ENCODE measurements at regions of chr15 and their contacts with region 1.

Region 1: DNA sequence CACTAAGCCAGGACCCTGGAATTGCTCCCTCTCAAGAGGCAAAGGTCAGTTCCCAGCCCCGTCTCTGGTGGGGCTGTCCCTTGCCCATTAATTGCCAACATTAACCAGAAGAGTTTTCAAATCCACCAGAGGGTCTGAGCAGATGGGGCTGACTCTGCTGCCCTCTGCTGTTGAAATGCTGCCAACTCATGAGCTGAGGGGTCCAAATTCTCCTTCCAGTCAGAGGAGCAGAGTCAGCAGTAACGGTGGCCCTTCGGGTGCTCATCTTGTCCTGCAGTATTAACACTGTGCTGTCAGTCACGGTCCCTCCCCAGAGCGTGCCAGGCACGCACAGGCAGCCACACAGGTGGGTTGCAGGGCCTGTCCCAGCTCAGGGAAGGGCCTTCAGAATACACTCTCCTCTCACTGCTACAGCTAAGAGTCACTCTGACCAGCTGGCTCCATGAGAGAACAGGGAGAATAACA is 10.7 kb upstream of the SPTBN5 start:
- DNase-seq: peak; percentile 70 to 88
- ATAC-seq: peak; percentile 87 to 93 (median 89)
- H3K4me3 ChIP-seq: no peak overlapping the region
- H3K4me3 Mint-ChIP-seq: no peak overlapping the region
- H3K27ac ChIP-seq: no peak overlapping the region
- H3K27ac Mint-ChIP-seq: peak overlapping the region; percentile 45 to 57
- H3K4me1 ChIP-seq: peaks cover 9% of the 10 kb centered on the region
- H3K4me1 Mint-ChIP-seq: peaks cover 7% of the 10 kb centered on the region in 2 donors
- H3K27me3 ChIP-seq: no peaks in the 10 kb centered on the region
- H3K27me3 Mint-ChIP-seq: no peaks in the 10 kb centered on the region
- CTCF ChIP-seq: peak; percentile 96

Region 2: DNA sequence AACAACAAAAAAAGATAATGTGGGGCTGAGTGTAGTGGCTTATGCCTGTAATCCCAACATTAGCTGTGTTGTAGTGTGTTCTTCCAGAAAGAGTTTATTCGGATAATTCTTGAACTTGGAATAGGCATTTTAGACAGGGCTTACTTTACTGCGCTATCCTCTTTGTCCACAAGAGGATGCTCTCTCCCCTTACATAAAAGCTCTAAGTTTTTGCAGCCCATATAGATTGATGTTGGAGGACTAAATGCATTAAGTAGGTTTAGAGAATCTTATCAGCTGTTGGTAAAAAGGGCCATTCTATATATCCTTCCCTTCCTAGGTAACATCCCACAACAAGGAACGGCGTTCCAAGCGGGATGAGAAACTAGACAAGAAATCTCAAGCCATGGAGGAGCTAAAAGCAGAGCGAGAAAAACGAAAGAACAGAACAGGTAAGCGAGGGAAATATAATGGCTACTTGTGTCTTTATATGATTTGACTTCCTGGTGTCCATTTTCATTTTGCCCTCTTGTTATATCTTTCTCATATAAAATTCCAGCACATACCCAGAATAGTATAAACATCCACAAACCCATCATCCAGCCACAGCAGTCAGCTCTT is 438.7 kb before region 1 on chr15:
- intact Hi-C with region 1: loop called (anchors 5 kb)
- DNase-seq: peak in 1 of 2 donors; percentile 70
- ATAC-seq: peak; percentile 63 to 85 (median 78)
- H3K4me3 ChIP-seq: no peak overlapping the region
- H3K4me3 Mint-ChIP-seq: peak overlapping the region; percentile 75
- H3K27ac ChIP-seq: no peak overlapping the region
- H3K27ac Mint-ChIP-seq: peak overlapping the region; percentile 23 to 37
- H3K4me1 ChIP-seq: peaks cover 6% of the 10 kb centered on the region
- H3K4me1 Mint-ChIP-seq: peaks cover 18 to 23% of the 10 kb centered on the region in 2 donors
- H3K27me3 ChIP-seq: no peaks in the 10 kb centered on the region
- H3K27me3 Mint-ChIP-seq: no peaks in the 10 kb centered on the region
- CTCF ChIP-seq: peak; percentile 93

Region 3: GRCh38 chr15:41557673-41558399 is 346.7 kb before region 1 on chr15:
- intact Hi-C with region 1: loop called (anchors 5 kb)
- DNase-seq: peak; percentile 76 to 87
- ATAC-seq: peak; percentile 84 to 92 (median 90)
- H3K4me3 ChIP-seq: no peak overlapping the region
- H3K4me3 Mint-ChIP-seq: peak overlapping the region; percentile 94
- H3K27ac ChIP-seq: peak overlapping the region; percentile 10
- H3K27ac Mint-ChIP-seq: peak overlapping the region; percentile 90 to 95
- H3K4me1 ChIP-seq: peaks cover 21% of the 10 kb centered on the region
- H3K4me1 Mint-ChIP-seq: peaks cover 11 to 26% of the 10 kb centered on the region in 2 donors
- H3K27me3 ChIP-seq: peaks cover 23% of the 10 kb centered on the region
- H3K27me3 Mint-ChIP-seq: peaks cover 0 to 26% of the 10 kb centered on the region in 2 donors
- CTCF ChIP-seq: peak; percentile 97

Region 4: GRCh38 chr15:41603941-41604911 is 300.3 kb before region 1 on chr15:
- intact Hi-C with region 1: loop called (anchors 5 kb)
- DNase-seq: peak; percentile 30 to 79
- ATAC-seq: peak; percentile 80 to 96 (median 85)
- H3K4me3 ChIP-seq: no peak overlapping the region
- H3K4me3 Mint-ChIP-seq: no peak overlapping the region
- H3K27ac ChIP-seq: no peak overlapping the region
- H3K27ac Mint-ChIP-seq: no peak overlapping the region
- H3K4me1 ChIP-seq: peaks cover 7% of the 10 kb centered on the region
- H3K4me1 Mint-ChIP-seq: peaks cover 7 to 10% of the 10 kb centered on the region in 2 donors
- H3K27me3 ChIP-seq: no peaks in the 10 kb centered on the region
- H3K27me3 Mint-ChIP-seq: peaks cover 24 to 35% of the 10 kb centered on the region in 2 donors
- CTCF ChIP-seq: peak; percentile 66

Region 5: GRCh38 chr15:41695750-41696426 is 208.7 kb before region 1 on chr15:
- intact Hi-C with region 1: loop called (anchors 1 kb)
- DNase-seq: peak in 1 of 2 donors; percentile 78
- ATAC-seq: peak; percentile 96 to 98 (median 98)
- H3K4me3 ChIP-seq: no peak overlapping the region
- H3K4me3 Mint-ChIP-seq: peak overlapping the region; percentile 32
- H3K27ac ChIP-seq: peak overlapping the region; percentile 60
- H3K27ac Mint-ChIP-seq: peak overlapping the region; percentile 64 to 80
- H3K4me1 ChIP-seq: no peaks in the 10 kb centered on the region
- H3K4me1 Mint-ChIP-seq: peaks cover 21 to 41% of the 10 kb centered on the region in 2 donors
- H3K27me3 ChIP-seq: no peaks in the 10 kb centered on the region
- H3K27me3 Mint-ChIP-seq: no peaks in the 10 kb centered on the region
- CTCF ChIP-seq: peak; percentile 56

Region 6: DNA sequence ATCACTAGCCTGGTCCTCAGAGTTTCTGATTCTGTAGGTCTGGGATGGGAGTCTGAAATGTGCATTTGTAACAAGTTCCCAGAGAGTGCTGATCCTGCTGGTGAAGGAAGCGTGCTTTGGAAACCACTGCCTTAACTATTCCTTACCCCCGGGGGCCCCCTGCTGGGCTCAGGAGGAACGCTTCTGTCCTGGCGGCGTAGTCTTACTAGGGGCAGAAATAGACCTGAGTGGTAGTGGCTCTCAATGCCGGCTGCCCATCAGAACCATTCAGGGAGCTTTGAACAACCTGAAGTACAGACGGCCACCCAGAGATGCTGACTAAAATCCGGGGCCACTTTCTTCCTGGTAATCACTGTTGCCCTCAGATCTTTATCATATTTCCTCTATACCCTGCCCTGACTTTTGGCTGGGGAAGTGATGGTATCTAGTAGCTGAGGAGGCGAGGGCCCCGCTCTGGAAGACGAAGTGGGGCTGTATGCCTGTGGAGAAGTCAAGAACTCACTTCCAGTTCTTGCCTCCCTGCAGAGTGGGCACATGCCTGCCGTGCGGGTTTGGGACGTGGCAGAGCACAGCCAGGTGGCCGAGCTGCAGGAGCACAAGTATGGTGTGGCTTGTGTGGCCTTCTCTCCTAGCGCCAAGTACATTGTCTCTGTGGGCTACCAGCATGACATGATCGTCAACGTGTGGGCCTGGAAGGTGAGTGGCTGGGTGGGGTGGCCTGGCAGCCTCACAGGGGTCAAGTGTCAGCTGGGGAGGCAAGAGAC is 93.0 kb before region 1 on chr15:
- intact Hi-C with region 1: loop called (anchors 1 kb)
- DNase-seq: peak; percentile 75 to 86
- ATAC-seq: peak; percentile 83 to 99 (median 98)
- H3K4me3 ChIP-seq: no peak overlapping the region
- H3K4me3 Mint-ChIP-seq: no peak overlapping the region
- H3K27ac ChIP-seq: no peak overlapping the region
- H3K27ac Mint-ChIP-seq: no peak overlapping the region
- H3K4me1 ChIP-seq: peaks cover 13% of the 10 kb centered on the region
- H3K4me1 Mint-ChIP-seq: peaks cover 7 to 9% of the 10 kb centered on the region in 2 donors
- H3K27me3 ChIP-seq: no peaks in the 10 kb centered on the region
- H3K27me3 Mint-ChIP-seq: no peaks in the 10 kb centered on the region
- CTCF ChIP-seq: peak; percentile 89

Region 7: DNA sequence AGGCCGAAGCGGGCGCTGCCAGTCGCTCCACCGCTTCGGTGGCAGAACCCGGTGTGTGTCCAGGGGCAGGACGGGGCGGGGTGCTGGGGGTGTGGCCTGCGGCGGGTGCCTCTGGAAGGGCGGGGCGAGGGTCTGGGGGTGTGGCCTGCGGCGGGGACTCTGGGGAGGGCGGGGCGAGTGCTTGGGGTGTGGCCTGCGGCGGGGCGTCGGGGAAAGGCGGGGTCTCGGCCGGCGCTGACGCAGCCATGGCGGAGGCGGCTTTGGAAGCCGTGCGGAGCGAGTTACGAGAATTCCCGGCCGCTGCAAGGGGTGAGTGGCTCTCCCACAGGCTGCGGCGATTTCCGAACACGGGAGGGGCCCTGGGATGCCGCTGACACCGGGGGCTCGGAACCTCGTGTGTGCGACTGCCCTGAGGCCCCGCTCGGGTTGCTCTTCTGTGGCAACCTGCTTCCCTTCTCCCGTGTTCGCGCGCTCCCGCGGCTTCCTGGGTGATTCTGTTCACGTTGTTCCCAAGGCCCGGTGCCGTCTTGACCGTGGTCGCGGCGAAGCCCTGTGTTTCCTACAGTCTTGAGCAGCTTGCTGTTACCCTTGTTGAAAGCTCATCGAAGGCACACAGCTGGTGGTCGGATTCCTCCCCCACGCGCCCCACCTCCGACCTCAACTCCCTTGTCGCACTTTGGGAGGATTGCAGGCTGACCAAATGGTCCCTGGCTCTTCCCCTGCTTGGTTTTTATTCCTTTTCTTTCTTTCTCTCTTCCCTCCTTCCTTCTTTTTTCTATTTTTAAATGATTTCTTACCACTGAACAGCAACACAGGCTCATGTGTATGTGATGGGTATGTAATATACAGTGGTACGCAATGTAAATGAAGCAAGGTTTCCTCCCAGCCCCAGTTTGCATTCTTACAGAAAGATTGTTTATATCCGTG is 76.4 kb before region 1 on chr15 and contains the start of gene JMJD7:
- intact Hi-C with region 1: loop called (anchors 5 kb)
- DNase-seq: peak; percentile 91 to 96
- ATAC-seq: peak; percentile 98 to 99 (median 99)
- H3K4me3 ChIP-seq: peak within 1 kb of the TSS; percentile 82
- H3K4me3 Mint-ChIP-seq: peak within 1 kb of the TSS; percentile 95
- H3K27ac ChIP-seq: peak within 1 kb of the TSS; percentile 61
- H3K27ac Mint-ChIP-seq: peak within 1 kb of the TSS; percentile 79 to 84
- H3K4me1 ChIP-seq: peaks cover 38% of the 10 kb centered on the region
- H3K4me1 Mint-ChIP-seq: peaks cover 35% of the 10 kb centered on the region in 2 donors
- H3K27me3 ChIP-seq: no peaks in the 10 kb centered on the region
- H3K27me3 Mint-ChIP-seq: no peaks in the 10 kb centered on the region
- CTCF ChIP-seq: no peak
- total RNA-seq, gene JMJD7: 20.3 to 36.4 (median 28.7) TPM

Measured in natural killer cell (primary cell).